Cardiac septum (tissue), 1 donor: ENCODE measurements at regions of chr10 and their contacts with region 1.

Region 1: GRCh38 chr10:88835096-88835909 is 16.3 kb downstream of the ANKRD22 start:
- DNase-seq: peak; percentile 90

Region 2: DNA sequence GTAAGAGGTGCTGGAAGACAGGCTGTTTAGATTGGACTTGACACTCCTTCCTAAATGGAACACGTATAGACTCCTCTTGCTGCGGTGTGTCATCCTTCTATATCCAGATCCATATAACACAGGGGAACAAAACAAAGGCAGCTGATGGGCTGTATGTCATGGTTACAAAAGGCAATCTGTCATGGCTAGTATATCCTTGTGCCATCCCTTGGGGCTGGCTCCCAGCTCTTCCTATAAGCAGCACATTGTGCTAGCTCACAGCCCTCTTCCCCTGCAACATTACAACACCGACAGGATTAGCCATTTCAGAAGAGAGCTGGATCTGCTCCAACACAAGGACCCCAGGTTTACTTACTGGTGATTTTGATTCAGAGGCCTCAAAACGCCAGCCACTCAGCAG is 113.9 kb before region 1 on chr10:
- intact Hi-C with region 1: no loop called
- DNase-seq: no peak

Region 3: DNA sequence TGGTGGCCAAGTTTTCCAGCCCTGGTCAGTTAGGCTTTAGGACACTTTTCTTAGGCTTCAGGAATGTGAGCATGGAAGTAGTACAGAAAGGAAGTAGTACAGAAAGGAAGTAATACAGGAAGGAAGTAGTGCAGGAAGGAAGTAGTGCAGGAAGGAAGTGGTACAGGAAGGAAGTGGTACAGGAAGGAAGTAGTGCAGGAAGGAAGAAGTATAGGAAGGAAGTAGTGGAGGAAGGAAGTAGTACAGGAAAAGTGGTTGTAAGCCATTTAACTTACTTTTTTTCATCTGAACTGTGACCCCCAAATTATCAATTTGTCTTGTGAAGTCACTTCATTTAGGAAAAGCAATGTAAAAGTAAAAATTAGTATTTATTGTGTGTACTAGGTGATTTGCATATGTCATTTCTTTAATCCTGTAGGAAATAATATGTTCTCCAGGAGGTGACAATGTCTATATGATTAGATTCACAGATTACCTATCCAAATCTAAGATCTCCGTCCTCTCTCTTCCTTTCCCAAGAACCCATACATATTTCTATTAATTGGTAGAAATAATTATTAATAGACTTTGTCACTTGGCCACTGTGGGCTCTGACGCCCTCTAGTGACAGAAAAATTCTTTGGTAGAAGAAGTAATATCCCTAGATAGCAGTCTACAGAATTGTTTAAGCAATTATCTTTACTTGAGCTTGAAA is 151.4 kb after region 1 on chr10:
- intact Hi-C with region 1: loop called (anchors 5 kb)
- DNase-seq: no peak

Region 4: DNA sequence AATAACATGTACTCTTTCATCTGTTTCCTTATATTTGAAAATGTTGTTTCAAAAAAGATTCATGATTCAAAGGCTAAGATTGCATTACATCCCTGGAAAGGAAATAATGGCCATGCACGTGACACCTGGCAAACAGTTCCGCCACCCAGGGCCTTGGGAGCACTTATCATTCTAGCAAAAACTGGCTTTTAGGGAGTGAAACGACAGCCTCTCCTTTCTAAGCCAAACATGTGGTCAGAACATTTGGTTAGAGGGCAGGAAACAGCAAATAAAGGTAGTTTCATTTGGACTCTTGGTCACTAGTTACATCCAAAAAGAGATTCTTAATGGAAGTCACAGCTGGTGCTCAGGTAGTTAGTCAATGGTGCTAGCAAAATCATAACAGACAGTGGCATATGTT is 238.8 kb after region 1 on chr10:
- intact Hi-C with region 1: no loop called
- DNase-seq: no peak

Region 5: DNA sequence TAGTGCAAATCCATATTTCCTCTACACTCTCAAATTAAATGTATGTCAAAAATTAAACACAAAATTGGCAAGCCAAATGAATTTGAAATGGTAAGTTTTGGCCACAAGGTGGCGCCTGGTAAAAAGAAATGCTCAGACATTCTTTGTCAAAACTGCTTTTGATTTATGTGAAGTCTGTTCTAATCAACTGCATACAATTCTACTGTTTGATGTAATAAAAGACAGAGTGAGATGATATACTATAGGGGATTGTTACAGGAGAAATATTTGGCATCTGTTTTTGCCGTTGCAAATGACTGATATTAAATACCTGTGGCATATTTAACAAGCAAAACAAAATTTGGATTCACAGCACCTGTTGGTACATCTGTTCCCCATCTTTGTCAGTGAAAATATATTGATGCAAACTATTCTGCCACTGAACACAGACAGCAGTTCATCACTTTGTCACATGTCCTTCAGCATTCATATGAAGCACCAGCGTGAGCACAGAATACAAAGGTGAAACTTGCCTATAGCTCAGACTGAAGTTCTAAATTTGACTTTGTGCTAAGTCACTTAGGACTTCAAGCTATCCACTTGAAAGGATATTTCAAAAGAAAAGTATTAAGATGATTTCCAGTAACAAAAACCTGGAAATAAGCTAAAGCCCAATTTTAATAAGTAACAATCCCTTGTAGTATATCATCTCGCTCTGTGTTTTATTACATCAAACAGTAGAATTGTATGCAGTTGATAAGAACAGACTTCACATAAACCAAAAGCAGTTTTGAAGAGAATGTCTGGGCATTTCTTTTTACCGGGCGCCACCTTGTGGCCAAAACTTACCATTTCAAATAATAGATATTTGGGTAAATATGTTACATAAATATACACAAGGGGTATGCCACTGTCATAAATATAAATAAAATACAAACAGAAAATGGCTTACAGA is 382.0 kb after region 1 on chr10:
- intact Hi-C with region 1: loop called (anchors 5 kb)
- DNase-seq: no peak